ENCODE measurements at regions of chr6 and their contacts with region 1.

Region 1: GRCh38 chr6:145929037-145929633 is 35.0 kb downstream of the SHPRH start:
- DNase-seq: peak; percentile 13
- H3K4me3 ChIP-seq: no peak overlapping the region
- H3K27ac ChIP-seq: no peak overlapping the region
- H3K27me3 ChIP-seq: no peaks in the 10 kb centered on the region
- CTCF ChIP-seq: peak; percentile 73

Region 2: GRCh38 chr6:145948328-145948727 is 19.2 kb after region 1 on chr6:
- CTCF ChIA-PET with region 1: interaction called, 11 read pairs
- POLR2A ChIA-PET with region 1: no interaction called
- DNase-seq: no peak
- H3K4me3 ChIP-seq: no peak overlapping the region
- H3K27ac ChIP-seq: no peak overlapping the region
- H3K27me3 ChIP-seq: no peaks in the 10 kb centered on the region
- CTCF ChIP-seq: no peak